Calu3 (cell line): ENCODE measurements at regions of chr21 and their contacts with region 1.

Region 1: GRCh38 chr21:38257667-38258066 is 876 bp downstream of the KCNJ15 start:
- DNase-seq: no peak
- H3K4me3 Mint-ChIP-seq: peak overlapping the region; percentile 82
- H3K27ac Mint-ChIP-seq: peak overlapping the region; percentile 85
- H3K4me1 Mint-ChIP-seq: peaks cover 54% of the 10 kb centered on the region
- H3K27me3 Mint-ChIP-seq: no peaks in the 10 kb centered on the region
- CTCF ChIP-seq: no peak

Region 2: GRCh38 chr21:38246511-38246910 is 11.2 kb before region 1 on chr21:
- CTCF ChIA-PET with region 1: interaction called, 12 read pairs
- intact Hi-C with region 1: no loop called
- DNase-seq: no peak
- H3K4me3 Mint-ChIP-seq: no peak overlapping the region
- H3K27ac Mint-ChIP-seq: no peak overlapping the region
- H3K4me1 Mint-ChIP-seq: peaks cover 41% of the 10 kb centered on the region
- H3K27me3 Mint-ChIP-seq: no peaks in the 10 kb centered on the region
- CTCF ChIP-seq: no peak